ENCODE measurements at regions of chr4 and their contacts with region 1.

Region 1: GRCh38 chr4:107183155-107183774 is 147.2 kb upstream of the DKK2 start:
- DNase-seq: peak; percentile 44
- H3K4me3 ChIP-seq: no peak overlapping the region; a peak in 1 of 4 replicates
- H3K27ac ChIP-seq: no peak overlapping the region; a peak in 1 of 4 replicates
- H3K4me1 ChIP-seq: peaks cover 0 to 5% of the 10 kb centered on the region in 2 experiments; a peak in 2 of 4 replicates
- H3K27me3 ChIP-seq: no peaks in the 10 kb centered on the region
- CTCF ChIP-seq: peak; percentile 89
- EP300 ChIP-seq: peak in 1 of 2 experiments; percentile 28; a peak in 2 of 4 replicates
- RAD21 ChIP-seq: peak; percentile 92

Region 2: DNA sequence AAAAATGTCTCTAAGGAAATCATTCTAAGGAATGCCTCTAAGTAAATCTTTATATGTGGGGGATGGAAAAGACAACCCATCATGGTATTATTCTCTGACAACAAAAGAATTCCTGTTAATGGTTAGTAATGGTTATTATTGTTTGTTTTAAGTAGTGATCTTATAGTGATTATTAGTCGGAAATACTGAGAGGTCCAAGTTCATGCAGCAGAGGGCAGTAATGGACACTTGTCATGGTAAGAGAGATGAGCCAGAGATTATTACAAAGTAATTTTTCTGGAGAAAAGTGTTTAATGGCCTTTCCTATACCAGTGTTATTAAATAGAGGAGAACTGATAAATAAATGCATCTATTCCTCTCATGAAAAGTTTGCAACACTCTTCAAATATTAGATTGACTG is 139.1 kb before region 1 on chr4:
- CTCF ChIA-PET with region 1: interaction called, 69 read pairs
- POLR2A ChIA-PET with region 1: no interaction called
- DNase-seq: no peak
- H3K4me3 ChIP-seq: no peak overlapping the region
- H3K27ac ChIP-seq: no peak overlapping the region
- H3K4me1 ChIP-seq: no peaks in the 10 kb centered on the region
- H3K27me3 ChIP-seq: no peaks in the 10 kb centered on the region
- CTCF ChIP-seq: peak; percentile 51
- EP300 ChIP-seq: no peak
- RAD21 ChIP-seq: peak; percentile 40; the same call in 1 of the 2 replicates

Measured in SK-N-SH (cell line).